Right ventricle myocardium inferior (tissue), 1 donor: ENCODE measurements at regions of chr3 and their contacts with region 1.

Region 1: DNA sequence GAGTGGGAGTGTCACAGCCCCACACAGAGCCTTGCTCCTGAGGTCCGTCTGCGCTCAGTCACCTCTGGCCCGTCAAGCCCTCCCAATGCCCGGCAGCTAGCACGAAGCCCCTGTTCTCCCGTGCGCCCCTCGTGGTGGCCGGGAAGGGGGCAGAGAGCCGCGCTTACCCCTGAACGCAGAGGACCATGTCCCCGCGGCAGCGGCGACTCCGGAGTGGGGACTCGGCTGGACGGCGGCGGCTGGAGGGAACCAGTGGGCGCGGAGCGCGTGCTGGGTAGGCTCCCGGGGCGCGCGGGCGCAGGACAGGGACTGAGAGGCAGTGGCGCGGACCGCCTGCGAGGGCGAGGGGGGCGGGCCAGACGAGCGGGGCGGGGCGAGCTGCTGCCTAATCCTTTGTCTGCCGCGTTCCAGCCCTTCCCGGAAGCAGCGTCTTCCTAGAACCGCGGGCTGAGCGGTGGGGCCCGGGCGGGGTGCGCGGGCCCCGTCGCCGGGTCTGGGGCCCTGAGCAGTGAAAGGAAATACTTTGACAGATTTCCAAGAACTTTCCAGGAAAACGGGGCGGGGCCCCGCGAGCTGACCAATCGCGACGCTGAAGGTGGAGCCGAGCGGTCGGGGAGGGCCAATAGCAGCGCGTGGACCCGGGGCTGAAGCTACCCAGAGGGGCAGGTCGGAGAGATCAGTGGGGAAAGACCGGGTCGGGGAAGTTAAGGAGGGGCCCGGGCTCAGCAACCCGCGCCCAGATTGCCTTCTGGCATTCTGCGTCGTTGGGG is at the start of gene CISH:
- DNase-seq: peak; percentile 98
- ATAC-seq: peak; percentile 87
- total RNA-seq, gene CISH: 13.2 TPM

Region 2: DNA sequence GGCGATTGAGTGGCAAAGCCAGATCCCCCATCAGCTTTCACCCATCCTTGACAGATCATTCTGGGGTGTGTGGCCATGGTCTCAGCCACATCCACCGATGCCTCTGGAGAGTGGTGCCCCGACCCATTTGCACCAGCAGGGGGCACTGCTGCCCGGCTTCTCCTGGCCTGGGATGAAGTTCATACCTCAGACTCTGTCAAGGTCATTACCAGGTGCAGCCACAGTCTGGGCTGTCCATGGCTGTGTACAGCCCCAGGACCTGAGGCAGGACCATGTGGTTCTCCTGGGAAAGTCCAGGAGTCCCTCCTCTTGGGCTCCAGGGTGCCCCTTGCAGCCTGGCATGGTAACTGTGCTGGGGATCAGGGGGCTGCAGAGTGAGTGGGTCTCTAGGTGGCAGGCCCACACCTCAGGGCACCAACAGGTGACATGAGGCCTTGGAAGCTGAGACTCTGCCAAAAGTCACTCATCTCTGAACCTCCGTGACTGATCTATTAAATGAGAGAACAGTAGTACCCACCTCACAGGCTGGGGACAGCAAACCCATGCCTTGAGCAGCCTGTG is 175.5 kb before region 1 on chr3:
- intact Hi-C with region 1: loop called (anchors 5 kb)
- DNase-seq: no peak
- ATAC-seq: peak; percentile 77

Region 3: DNA sequence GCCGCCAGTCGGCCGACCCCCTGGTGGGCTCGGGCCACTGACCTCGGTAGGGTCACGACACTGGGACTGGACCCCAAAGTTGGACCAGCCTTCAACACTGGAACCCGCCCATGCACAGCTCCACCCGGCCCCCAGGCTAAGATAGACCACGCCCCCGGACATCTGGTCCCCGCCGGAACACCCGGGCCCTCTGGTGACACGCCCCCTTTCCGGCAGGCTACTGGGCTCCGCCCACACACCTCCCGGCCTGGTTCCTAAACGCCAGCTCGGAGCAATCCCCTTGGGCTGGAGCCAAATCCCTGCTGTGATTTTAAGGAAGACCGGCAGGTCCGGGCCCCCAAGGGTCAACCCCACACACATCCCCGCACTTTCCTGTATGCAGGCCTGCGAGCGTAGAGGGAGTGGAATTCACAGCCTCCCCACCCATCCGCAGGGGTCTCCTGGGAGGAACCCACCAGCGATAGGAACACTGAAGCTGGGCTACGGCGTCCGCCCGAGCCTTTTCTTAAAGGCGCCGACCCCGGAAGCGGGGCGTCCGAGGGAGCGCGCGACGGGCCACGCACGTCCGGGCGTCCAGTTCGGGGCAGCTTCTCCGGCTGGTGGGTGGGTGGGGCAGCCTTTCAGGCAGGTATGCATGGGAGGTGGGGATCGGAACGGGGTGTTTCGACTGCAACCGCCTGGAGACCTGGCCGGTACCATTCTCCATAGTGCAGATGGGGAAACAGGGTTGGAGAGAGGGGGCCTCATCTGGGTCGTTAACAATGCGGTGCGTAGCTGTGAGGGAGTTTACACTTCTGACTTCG is 42.5 kb before region 1 on chr3 and contains the start of gene HEMK1:
- intact Hi-C with region 1: loop called (anchors 1 kb)
- DNase-seq: peak; percentile 99
- ATAC-seq: peak; percentile 90
- total RNA-seq, gene HEMK1: 14.0 TPM

Region 4: GRCh38 chr3:51371943-51372557 is 760.4 kb after region 1 on chr3:
- intact Hi-C with region 1: loop called (anchors 5 kb)
- DNase-seq: no peak
- ATAC-seq: no peak

Region 5: GRCh38 chr3:51591231-51591630 is 979.6 kb after region 1 on chr3:
- intact Hi-C with region 1: no loop called
- DNase-seq: no peak
- ATAC-seq: no peak